ENCODE measurements at regions of chr5 and their contacts with region 1.

Region 1: GRCh38 chr5:90529194-90529938 is at the start of gene LYSMD3:
- H3K4me3 ChIP-seq: peak within 1 kb of the TSS; percentile 95
- H3K27ac ChIP-seq: peak within 1 kb of the TSS; percentile 87
- H3K4me1 ChIP-seq: no peaks in the 10 kb centered on the region
- CTCF ChIP-seq: no peak

Region 2: DNA sequence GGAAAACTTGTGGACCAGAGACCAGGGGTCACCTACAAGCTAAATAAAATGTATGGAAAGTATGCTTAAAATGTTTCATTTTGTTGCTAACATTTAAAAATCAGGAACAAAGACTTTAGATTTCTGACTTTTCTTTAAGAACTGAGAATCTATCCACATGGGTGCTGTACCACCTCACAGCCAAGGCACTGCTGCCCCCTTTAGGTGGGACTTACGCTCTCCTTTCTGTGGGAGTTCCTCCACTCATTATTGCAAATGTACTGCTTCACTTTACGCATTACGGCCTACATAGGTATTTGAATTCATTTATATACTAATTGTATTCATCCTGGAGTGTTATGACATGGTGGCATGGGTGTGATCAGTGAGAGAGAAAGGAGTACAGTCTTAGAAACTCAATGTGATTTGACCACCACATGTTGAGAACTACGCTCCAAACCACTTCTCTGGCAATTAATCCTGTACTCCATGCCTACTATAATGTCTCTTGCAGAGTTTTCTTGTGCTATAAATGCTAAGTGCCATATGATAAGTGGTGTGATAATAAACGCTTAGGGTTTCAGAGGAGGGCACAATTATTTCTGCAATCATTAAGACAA is 95.2 kb before region 1 on chr5:
- CTCF ChIA-PET with region 1: interaction called, 20 read pairs
- POLR2A ChIA-PET with region 1: interaction called, 6 read pairs
- H3K4me3 ChIP-seq: no peak overlapping the region
- H3K27ac ChIP-seq: no peak overlapping the region
- H3K4me1 ChIP-seq: peaks cover 10% of the 10 kb centered on the region
- CTCF ChIP-seq: no peak

Region 3: GRCh38 chr5:90474235-90475109 is 54.9 kb before region 1 on chr5 and contains the starts of genes MBLAC2 and POLR3G:
- CTCF ChIA-PET with region 1: interaction called, 6 read pairs
- POLR2A ChIA-PET with region 1: interaction called, 12 read pairs
- H3K4me3 ChIP-seq: peak within 1 kb of the TSS; percentile 73
- H3K27ac ChIP-seq: peak within 1 kb of the TSS; percentile 76
- H3K4me1 ChIP-seq: no peaks in the 10 kb centered on the region
- CTCF ChIP-seq: peak; percentile 99

Measured in HEK293 (cell line).